GM13976 (cell line): ENCODE measurements at regions of chr9 and their contacts with region 1.

Region 1: GRCh38 chr9:114681594-114682332 is at the start of gene TEX48:
- DNase-seq: peak; percentile 69
- CTCF ChIP-seq: peak; percentile 69

Region 2: GRCh38 chr9:114738581-114739316 is 57.0 kb after region 1 on chr9:
- in situ Hi-C with region 1: loop called (anchors 10 kb)
- DNase-seq: peak; percentile 63
- CTCF ChIP-seq: peak; percentile 63

Region 3: GRCh38 chr9:114894801-114895433 is 213.2 kb after region 1 on chr9:
- in situ Hi-C with region 1: loop called (anchors 10 kb)
- DNase-seq: no peak
- CTCF ChIP-seq: no peak

Region 4: GRCh38 chr9:115524453-115525059 is 842.8 kb after region 1 on chr9:
- in situ Hi-C with region 1: loop called (anchors 25 kb)
- DNase-seq: peak; percentile 24
- CTCF ChIP-seq: no peak